Heart left ventricle (tissue), 16 donors: ENCODE measurements at regions of chr2 and their contacts with region 1.

Region 1: GRCh38 chr2:30410217-30410616 is 36.8 kb upstream of the LCLAT1 start:
- DNase-seq: no peak
- ATAC-seq: no peak
- H3K4me3 ChIP-seq: no peak overlapping the region
- H3K27ac ChIP-seq: peak overlapping the region in 11 of 12 donors; percentile 51 to 91 (median 82)
- H3K4me1 ChIP-seq: peaks cover 3 to 77% (median 58%) of the 10 kb centered on the region in 12 donors
- H3K27me3 ChIP-seq: no peaks in the 10 kb centered on the region
- CTCF ChIP-seq: no peak
- POLR2A ChIP-seq: no peak

Region 2: DNA sequence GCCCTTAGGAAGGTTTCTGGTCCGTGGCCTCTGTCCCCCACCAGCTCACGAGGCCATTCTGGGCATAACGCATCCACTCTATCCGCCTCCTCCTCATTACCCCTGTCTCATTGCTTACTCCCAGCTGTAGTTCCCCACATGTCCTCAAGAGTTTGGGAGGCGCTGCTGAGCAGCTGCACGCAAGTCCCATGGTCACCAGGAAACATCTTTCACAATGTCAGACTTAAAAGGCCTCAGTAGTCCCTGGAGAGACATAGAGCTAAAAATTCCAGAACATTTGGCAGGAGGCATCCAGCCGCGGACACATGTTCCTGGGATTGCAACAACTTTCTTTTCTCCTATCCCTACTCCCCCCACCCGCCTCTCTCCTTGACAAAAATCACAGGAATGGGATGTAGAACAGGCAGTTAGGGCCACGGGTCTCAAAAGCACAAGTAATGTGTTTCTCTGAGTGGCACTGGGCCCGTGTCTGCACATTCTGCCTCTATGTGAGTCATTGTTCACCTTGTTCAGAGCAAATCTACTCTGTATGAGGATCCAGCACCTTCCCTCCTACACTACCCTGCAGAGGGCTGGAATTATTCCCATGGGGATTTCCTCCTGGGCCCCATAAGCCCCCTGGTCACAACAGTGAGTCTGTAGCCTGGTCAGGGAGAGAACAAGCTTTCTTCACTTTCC is 170.8 kb before region 1 on chr2:
- intact Hi-C with region 1: loop called in 9 of 10 experiments (anchors 2 to 10 kb)
- DNase-seq: peak; percentile 71 to 85 (median 78)
- ATAC-seq: peak; percentile 59 to 76 (median 62)
- H3K4me3 ChIP-seq: peak overlapping the region in 8 of 12 donors; percentile 0 to 37 (median 6)
- H3K27ac ChIP-seq: peak overlapping the region; percentile 35 to 100 (median 78)
- H3K4me1 ChIP-seq: peaks cover 20 to 96% (median 84%) of the 10 kb centered on the region in 12 donors
- H3K27me3 ChIP-seq: no peaks in the 10 kb centered on the region
- CTCF ChIP-seq: peak; percentile 88 to 99 (median 97)
- POLR2A ChIP-seq: peak in 1 of 2 donors; percentile 24

Region 3: DNA sequence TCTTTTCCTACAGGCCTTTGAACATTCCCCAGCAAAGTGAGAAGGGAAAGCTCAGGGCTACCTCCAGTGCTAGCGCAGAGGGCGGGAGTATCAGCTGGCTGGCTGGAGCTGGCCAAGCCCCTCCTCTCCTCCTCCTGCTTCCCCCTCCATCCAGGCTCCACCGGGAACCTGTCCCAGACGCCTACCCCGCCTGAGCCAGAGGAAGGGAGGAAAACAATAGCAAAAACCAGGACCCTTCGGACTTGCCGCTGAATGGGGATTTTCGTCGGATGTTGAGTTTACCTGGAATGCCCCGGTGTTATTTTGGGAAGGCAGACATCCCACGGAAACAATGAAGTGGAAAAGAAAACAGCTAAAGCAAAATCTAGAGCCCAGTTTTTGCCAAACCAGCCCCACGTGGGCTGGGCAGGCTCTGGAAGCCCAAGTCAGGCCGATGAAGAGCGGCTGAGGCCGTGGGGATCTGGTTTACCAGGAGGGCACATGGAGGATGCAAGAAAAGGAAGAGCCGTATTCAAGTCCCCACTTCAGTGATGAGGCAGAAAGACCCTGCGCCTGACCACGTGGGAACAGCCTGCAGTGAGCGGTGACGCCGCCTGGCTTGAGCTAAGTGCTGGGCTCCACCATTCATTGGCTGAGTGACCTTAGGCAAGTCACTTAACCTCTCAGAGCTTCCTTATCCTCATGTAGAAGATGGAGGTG is 63.6 kb before region 1 on chr2:
- intact Hi-C with region 1: loop called in 4 of 10 experiments (anchors 5 kb)
- DNase-seq: peak; percentile 85 to 92 (median 88)
- ATAC-seq: peak; percentile 96 to 98 (median 96)
- H3K4me3 ChIP-seq: peak overlapping the region; percentile 5 to 63 (median 54)
- H3K27ac ChIP-seq: peak overlapping the region; percentile 69 to 96 (median 86)
- H3K4me1 ChIP-seq: peaks cover 8 to 55% (median 37%) of the 10 kb centered on the region in 12 donors
- H3K27me3 ChIP-seq: no peaks in the 10 kb centered on the region
- CTCF ChIP-seq: no peak
- POLR2A ChIP-seq: peak in 1 of 2 donors; percentile 69

Region 4: DNA sequence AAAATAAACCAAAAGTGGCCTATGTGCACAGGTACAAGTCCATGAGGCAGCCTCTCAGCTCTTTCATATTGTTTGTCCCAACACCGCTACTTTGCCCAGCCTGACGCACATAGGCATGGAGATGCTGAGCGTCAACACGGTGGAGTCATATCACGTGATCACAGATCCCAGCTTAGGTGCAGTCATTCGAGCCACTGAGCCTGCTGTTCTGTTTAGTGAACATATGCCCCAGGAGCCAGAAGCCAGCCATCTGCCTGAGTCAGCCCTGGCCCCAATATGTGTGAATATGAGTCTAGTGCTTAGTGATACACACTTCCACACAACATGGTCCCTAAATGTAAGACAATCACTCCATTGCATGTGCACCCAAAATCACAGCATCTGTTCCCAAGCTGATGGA is 51.4 kb before region 1 on chr2:
- intact Hi-C with region 1: loop called in 5 of 10 experiments (anchors 2 to 5 kb)
- DNase-seq: no peak
- ATAC-seq: no peak
- H3K4me3 ChIP-seq: no peak overlapping the region
- H3K27ac ChIP-seq: peak overlapping the region in 11 of 12 donors; percentile 71 to 90 (median 81)
- H3K4me1 ChIP-seq: peaks cover 14 to 62% (median 47%) of the 10 kb centered on the region in 12 donors
- H3K27me3 ChIP-seq: no peaks in the 10 kb centered on the region
- CTCF ChIP-seq: no peak
- POLR2A ChIP-seq: no peak

Region 5: DNA sequence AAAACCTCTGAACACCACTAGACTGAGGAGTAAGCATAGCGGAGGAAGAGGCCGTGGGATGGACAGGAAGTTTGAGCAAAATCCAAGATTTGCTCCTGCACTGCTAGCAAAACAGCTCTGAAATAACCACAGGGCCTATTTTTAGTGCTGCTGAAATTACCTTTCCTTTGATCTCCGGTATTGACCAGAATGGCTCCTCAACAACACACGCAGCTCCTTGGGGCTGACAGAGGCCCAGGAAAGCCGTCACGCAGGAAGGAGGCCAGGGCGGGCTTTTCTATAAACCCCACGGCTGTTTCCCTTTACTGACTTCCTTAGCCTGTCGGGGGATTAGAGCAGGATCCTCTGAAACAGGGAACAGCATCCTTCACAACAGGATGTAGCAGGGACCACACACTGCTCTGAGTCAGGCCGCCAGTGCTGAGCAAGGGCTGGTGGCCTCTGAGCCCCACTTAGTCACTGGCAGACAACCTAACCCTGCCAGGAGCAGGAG is 44.0 kb before region 1 on chr2:
- intact Hi-C with region 1: loop called in 3 of 10 experiments (anchors 5 kb)
- DNase-seq: peak in 1 of 5 donors; percentile 41
- ATAC-seq: peak in 3 of 4 donors; percentile 11 to 85 (median 33)
- H3K4me3 ChIP-seq: no peak overlapping the region
- H3K27ac ChIP-seq: peak overlapping the region in 10 of 12 donors; percentile 41 to 76 (median 53)
- H3K4me1 ChIP-seq: peaks cover 17 to 47% (median 28%) of the 10 kb centered on the region in 12 donors
- H3K27me3 ChIP-seq: no peaks in the 10 kb centered on the region
- CTCF ChIP-seq: no peak
- POLR2A ChIP-seq: no peak

Region 6: GRCh38 chr2:30511122-30512083 is 101.2 kb after region 1 on chr2:
- intact Hi-C with region 1: loop called in 1 of 10 experiments (anchors 5 kb)
- DNase-seq: peak; percentile 45 to 63 (median 55)
- ATAC-seq: peak; percentile 73 to 87 (median 82)
- H3K4me3 ChIP-seq: no peak overlapping the region
- H3K27ac ChIP-seq: peak overlapping the region in 11 of 12 donors; percentile 45 to 80 (median 60)
- H3K4me1 ChIP-seq: peaks cover 3 to 62% (median 38%) of the 10 kb centered on the region in 12 donors
- H3K27me3 ChIP-seq: no peaks in the 10 kb centered on the region
- CTCF ChIP-seq: no peak
- POLR2A ChIP-seq: no peak

Region 7: GRCh38 chr2:30584116-30584515 is 173.9 kb after region 1 on chr2:
- intact Hi-C with region 1: loop called in 1 of 10 experiments (anchors 10 kb)
- DNase-seq: no peak
- ATAC-seq: peak; percentile 66 to 77 (median 67)
- H3K4me3 ChIP-seq: no peak overlapping the region
- H3K27ac ChIP-seq: peak overlapping the region; percentile 44 to 81 (median 73)
- H3K4me1 ChIP-seq: peaks cover 0 to 47% (median 15%) of the 10 kb centered on the region in 12 donors
- H3K27me3 ChIP-seq: no peaks in the 10 kb centered on the region
- CTCF ChIP-seq: no peak
- POLR2A ChIP-seq: no peak